ENCODE measurements at regions of chr5 and their contacts with region 1.

Region 1: DNA sequence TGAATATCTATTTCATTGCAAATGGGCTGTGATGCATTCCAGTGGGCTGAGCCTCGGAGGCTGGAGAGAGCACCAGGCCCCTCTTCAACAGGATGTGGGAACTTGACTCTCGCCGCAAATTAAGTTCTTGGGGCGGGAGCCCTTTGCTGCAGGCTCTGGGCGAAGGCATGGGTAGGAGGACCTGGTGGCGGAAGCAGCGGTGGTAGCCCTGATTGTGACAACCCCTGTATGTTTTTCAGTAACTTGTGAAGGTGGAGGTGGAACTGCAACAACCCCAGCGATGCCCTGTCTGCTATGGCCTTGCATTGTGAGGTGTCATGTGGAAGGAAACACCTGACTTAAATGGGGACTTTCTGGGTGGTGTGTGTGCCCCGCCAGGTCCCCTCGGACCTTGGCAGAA is 9.4 kb downstream of the FYB1 start:
- DNase-seq: peak; percentile 64 to 93 (median 80)
- ATAC-seq: peak; percentile 76
- H3K4me3 ChIP-seq: peak overlapping the region; percentile 42
- H3K4me3 Mint-ChIP-seq: peak overlapping the region; percentile 77
- H3K27ac ChIP-seq: peak overlapping the region; percentile 82
- H3K27ac Mint-ChIP-seq: peak overlapping the region; percentile 96
- H3K4me1 ChIP-seq: peaks cover 69% of the 10 kb centered on the region
- H3K4me1 Mint-ChIP-seq: peaks cover 98% of the 10 kb centered on the region
- H3K27me3 ChIP-seq: no peaks in the 10 kb centered on the region
- H3K27me3 Mint-ChIP-seq: no peaks in the 10 kb centered on the region
- CTCF ChIP-seq: no peak

Region 2: GRCh38 chr5:39194466-39195136 is 15.3 kb before region 1 on chr5:
- CTCF ChIA-PET with region 1: interaction called, 7 read pairs
- POLR2A ChIA-PET with region 1: interaction called, 209 read pairs
- intact Hi-C with region 1: loop called in 1 of 2 experiments (anchors 2 kb)
- DNase-seq: peak in 1 of 14 experiments; percentile 52
- ATAC-seq: no peak
- H3K4me3 ChIP-seq: peak overlapping the region; percentile 76
- H3K4me3 Mint-ChIP-seq: peak overlapping the region; percentile 85
- H3K27ac ChIP-seq: peak overlapping the region; percentile 79 to 83
- H3K27ac Mint-ChIP-seq: peak overlapping the region; percentile 96
- H3K4me1 ChIP-seq: peaks cover 50% of the 10 kb centered on the region
- H3K4me1 Mint-ChIP-seq: peaks cover 77% of the 10 kb centered on the region
- H3K27me3 ChIP-seq: no peaks in the 10 kb centered on the region
- H3K27me3 Mint-ChIP-seq: no peaks in the 10 kb centered on the region
- CTCF ChIP-seq: no peak

Measured in CD4-positive, alpha-beta T cell (primary cell).